WTC11 (cell line): ENCODE measurements at regions of chr7 and their contacts with region 1.

Region 1: GRCh38 chr7:11212080-11212711 is 238.5 kb downstream of the PHF14 start:
- DNase-seq: peak; percentile 53
- ATAC-seq: peak; percentile 81
- H3K4me3 Mint-ChIP-seq: no peak overlapping the region
- H3K27ac Mint-ChIP-seq: no peak overlapping the region
- H3K4me1 Mint-ChIP-seq: 0 out of 2 replicates have a peak, but pooled peaks cover 3% of the 10 kb centered on the region
- H3K27me3 Mint-ChIP-seq: no peaks in the 10 kb centered on the region
- CTCF ChIP-seq: peak; percentile 77

Region 2: DNA sequence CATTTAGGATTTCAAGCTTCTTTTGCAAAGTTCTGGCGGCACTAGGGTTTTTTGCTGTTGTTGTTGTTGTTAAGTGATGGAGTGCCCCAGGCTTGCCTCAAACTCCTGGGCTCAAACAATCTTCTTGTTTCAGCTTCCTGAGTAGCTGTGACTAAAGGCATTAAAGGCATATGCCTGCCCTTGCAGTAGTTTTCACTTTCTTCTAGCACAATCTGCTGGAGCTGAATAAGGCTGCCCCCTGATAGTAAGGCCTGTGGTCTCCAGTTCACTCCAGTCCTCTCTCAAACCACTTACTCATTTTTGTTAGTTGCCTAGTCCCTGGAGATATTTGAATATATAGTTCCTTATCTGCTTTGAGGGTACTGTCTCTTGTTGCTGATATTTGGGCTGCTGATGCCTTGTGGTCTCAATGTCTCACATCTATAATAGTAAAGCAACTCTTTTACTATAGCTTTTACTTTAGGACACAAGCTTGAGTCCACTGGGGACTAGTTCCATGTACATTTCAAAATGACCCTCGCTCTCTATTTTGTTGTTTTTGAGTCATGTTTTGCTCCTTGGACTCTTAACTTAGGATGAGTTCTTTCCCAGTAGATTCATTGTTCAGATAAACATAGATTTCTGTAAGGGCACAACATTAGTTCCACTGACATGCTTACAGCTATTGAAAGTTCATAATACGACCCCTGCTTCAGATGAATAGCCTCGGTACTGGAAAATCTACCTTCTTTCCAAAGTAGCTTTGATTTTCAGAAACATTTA is 213.0 kb before region 1 on chr7:
- CTCF ChIA-PET with region 1: no interaction called
- POLR2A ChIA-PET with region 1: no interaction called
- DNase-seq: no peak
- ATAC-seq: no peak
- H3K4me3 Mint-ChIP-seq: no peak overlapping the region
- H3K27ac Mint-ChIP-seq: peak overlapping the region; percentile 57; the same call in 1 of the 2 replicates
- H3K4me1 Mint-ChIP-seq: peaks cover 3% of the 10 kb centered on the region
- H3K27me3 Mint-ChIP-seq: no peaks in the 10 kb centered on the region
- CTCF ChIP-seq: no peak

Region 3: GRCh38 chr7:11228515-11228914 is 16.3 kb after region 1 on chr7:
- CTCF ChIA-PET with region 1: interaction called, 13 read pairs
- POLR2A ChIA-PET with region 1: no interaction called
- DNase-seq: no peak
- ATAC-seq: no peak
- H3K4me3 Mint-ChIP-seq: no peak overlapping the region
- H3K27ac Mint-ChIP-seq: no peak overlapping the region; the same call in 1 of the 2 replicates
- H3K4me1 Mint-ChIP-seq: peaks cover 21% of the 10 kb centered on the region
- H3K27me3 Mint-ChIP-seq: no peaks in the 10 kb centered on the region
- CTCF ChIP-seq: no peak